ENCODE measurements at regions of chr9 and their contacts with region 1.

Region 1: DNA sequence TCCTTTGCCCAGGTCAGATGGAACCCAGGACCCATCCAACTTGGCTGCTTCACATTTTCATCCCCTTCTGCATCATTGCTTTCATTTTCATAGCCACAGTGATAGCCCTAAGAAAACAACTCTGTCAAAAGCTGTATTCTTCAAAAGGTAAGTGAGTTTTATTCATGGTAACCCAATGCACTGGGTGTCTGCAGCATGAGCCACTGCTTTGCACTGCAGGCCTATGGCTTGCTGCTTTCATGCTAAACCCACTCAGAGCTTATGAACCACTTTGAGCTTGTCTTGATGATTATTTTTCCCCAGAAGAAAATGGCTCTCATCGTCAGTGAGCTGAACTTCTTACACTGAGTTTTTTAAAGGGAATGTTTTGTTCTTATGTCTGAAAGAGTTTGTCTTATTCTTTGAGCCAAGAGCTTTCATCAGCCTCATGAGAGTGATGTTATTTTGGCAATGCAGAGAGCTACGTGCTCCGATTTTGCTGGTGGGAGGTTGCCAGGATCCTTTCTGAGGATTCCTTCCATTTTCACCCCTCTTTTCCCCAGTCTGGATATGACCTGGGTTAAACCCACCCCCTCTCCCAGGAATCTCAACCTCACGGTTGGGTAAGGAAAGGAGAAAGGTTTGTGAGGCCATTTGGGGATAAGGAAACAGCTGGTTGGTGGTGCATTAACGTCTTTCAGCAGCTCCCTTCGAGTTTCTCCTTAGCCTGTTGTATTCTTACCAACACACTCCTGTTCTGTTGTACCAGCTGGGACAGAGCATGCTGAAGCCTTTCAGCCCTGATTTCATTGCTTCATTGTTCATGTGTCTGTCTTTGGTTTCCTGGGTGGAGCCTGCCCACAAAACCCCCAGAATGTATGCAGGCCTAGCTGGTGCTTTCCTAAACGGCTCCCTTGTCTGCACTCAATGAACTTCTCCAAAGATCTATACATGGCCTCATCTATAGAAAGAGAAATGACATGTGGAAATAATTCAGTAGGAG is 47.6 kb downstream of the PDCD1LG2 start:
- DNase-seq: peak; percentile 20 to 73 (median 61)
- ATAC-seq: peak; percentile 97
- H3K4me3 ChIP-seq: peak overlapping the region; percentile 24
- H3K4me3 Mint-ChIP-seq: peak overlapping the region; percentile 58 to 79 (median 68)
- H3K27ac ChIP-seq: peak overlapping the region; percentile 68
- H3K27ac Mint-ChIP-seq: peak overlapping the region; percentile 87 to 98 (median 94)
- H3K4me1 ChIP-seq: peaks cover 24 to 31% of the 10 kb centered on the region in 2 donors
- H3K4me1 Mint-ChIP-seq: peaks cover 32 to 59% (median 53%) of the 10 kb centered on the region in 7 donors
- H3K27me3 ChIP-seq: no peaks in the 10 kb centered on the region
- H3K27me3 Mint-ChIP-seq: no peaks in the 10 kb centered on the region

Region 2: DNA sequence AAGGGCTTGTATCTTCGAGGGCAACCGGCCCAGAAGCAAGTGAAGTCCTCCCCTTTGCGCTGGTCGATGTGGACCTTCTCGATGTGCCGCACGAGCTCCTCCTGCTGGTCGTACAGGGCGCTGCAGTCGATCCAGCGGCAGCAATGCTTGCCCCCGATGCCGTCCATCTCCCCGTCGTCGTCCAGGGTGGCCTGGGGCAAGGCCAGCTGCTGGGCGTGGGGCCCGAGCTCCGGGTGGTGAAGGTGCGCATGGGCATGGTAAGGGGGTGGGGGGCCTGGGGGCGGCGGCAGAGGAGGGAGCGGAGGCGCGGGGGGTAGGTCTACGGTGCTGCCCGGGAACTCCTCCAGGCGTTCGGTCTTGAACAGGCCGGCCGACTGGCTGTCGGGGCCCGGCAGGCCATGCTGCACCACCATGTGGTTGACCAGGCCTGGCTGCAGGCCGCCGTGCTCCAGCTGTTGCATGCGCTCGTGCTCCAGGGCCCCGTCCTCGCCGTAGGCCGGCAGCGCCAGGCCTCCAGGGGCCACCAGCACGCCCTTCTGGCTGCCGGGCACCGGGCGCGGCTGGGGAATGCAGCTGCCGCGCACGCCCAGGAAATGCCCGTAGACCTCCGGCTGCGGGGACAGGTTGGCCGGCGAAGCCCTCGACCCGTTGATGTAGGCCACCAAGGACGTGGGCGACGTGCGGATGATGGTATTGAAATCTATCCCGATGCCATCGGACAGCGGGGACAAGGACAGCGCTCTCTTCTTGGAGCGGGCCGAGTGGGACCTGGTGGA is 1439.9 kb before region 1 on chr9:
- CTCF ChIA-PET with region 1: no interaction called
- POLR2A ChIA-PET with region 1: no interaction called
- intact Hi-C with region 1: no loop called
- DNase-seq: peak in 7 of 9 donors; percentile 5 to 48 (median 13)
- ATAC-seq: no peak
- H3K4me3 ChIP-seq: no peak overlapping the region
- H3K4me3 Mint-ChIP-seq: no peak overlapping the region
- H3K27ac ChIP-seq: no peak overlapping the region
- H3K27ac Mint-ChIP-seq: no peak overlapping the region
- H3K4me1 ChIP-seq: no peaks in the 10 kb centered on the region
- H3K4me1 Mint-ChIP-seq: peaks cover 0 to 2% (median 0%) of the 10 kb centered on the region in 7 donors
- H3K27me3 ChIP-seq: no peaks in the 10 kb centered on the region
- H3K27me3 Mint-ChIP-seq: no peaks in the 10 kb centered on the region

Region 3: GRCh38 chr9:5450359-5451091 is 107.4 kb before region 1 on chr9 and contains the start of gene CD274:
- CTCF ChIA-PET with region 1: interaction called, 3 read pairs
- POLR2A ChIA-PET with region 1: interaction called, 14 read pairs
- intact Hi-C with region 1: loop called (anchors 1 to 2 kb)
- DNase-seq: peak; percentile 61 to 89 (median 80)
- ATAC-seq: peak; percentile 95
- H3K4me3 ChIP-seq: peak within 1 kb of the TSS; percentile 78
- H3K4me3 Mint-ChIP-seq: peak within 1 kb of the TSS; percentile 92 to 98 (median 95)
- H3K27ac ChIP-seq: peak within 1 kb of the TSS; percentile 94
- H3K27ac Mint-ChIP-seq: peak within 1 kb of the TSS; percentile 97 to 99 (median 98)
- H3K4me1 ChIP-seq: peaks cover 0 to 11% of the 10 kb centered on the region in 2 donors
- H3K4me1 Mint-ChIP-seq: peaks cover 33 to 69% (median 62%) of the 10 kb centered on the region in 7 donors
- H3K27me3 ChIP-seq: no peaks in the 10 kb centered on the region
- H3K27me3 Mint-ChIP-seq: no peaks in the 10 kb centered on the region
- total RNA-seq, gene CD274: 2.9 to 38.7 (median 7.8) TPM

Region 4: DNA sequence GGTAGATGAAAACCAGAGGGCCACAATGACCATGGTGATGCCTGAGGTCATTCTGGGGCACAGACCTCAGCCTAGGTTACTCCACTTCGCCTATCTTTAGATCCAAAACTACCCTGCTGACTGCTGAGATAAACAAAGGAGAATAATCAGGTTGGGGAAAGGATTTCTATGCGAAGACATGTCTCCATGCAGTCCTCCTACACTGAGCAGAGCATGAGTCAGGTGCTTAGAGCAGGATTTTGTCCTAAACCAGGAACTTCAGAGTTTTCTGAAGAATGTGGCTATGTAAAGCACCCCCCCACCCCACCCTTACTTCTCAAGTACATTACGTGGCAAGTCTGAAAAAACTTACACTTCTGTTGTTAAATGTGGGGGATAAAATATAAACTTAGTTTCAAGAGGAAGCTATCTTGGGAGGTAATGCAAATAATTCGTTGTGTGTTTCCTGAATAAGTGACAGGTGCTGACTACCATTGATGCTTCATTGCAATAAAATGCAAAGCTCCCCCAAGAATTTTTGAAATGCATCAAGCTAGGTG is 28.1 kb before region 1 on chr9:
- CTCF ChIA-PET with region 1: no interaction called
- POLR2A ChIA-PET with region 1: interaction called, 4 read pairs
- intact Hi-C with region 1: loop called in 1 of 2 experiments (anchors 2 kb)
- DNase-seq: no peak
- ATAC-seq: no peak
- H3K4me3 ChIP-seq: no peak overlapping the region
- H3K4me3 Mint-ChIP-seq: no peak overlapping the region
- H3K27ac ChIP-seq: no peak overlapping the region
- H3K27ac Mint-ChIP-seq: peak overlapping the region in 6 of 9 donors; percentile 5 to 72 (median 28)
- H3K4me1 ChIP-seq: peaks cover 19 to 32% of the 10 kb centered on the region in 2 donors
- H3K4me1 Mint-ChIP-seq: peaks cover 20 to 50% (median 42%) of the 10 kb centered on the region in 7 donors
- H3K27me3 ChIP-seq: no peaks in the 10 kb centered on the region
- H3K27me3 Mint-ChIP-seq: no peaks in the 10 kb centered on the region

Region 5: GRCh38 chr9:5569409-5569808 is 11.5 kb after region 1 on chr9:
- CTCF ChIA-PET with region 1: interaction called, 5 read pairs
- POLR2A ChIA-PET with region 1: interaction called, 23 read pairs
- intact Hi-C with region 1: loop called in 1 of 2 experiments (anchors 1 kb)
- DNase-seq: no peak
- ATAC-seq: peak; percentile 90
- H3K4me3 ChIP-seq: no peak overlapping the region
- H3K4me3 Mint-ChIP-seq: peak overlapping the region in 3 of 10 donors; percentile 3 to 62 (median 60)
- H3K27ac ChIP-seq: no peak overlapping the region
- H3K27ac Mint-ChIP-seq: peak overlapping the region in 5 of 9 donors; percentile 5 to 92 (median 67)
- H3K4me1 ChIP-seq: peaks cover 13 to 14% of the 10 kb centered on the region in 2 donors
- H3K4me1 Mint-ChIP-seq: peaks cover 14 to 24% (median 18%) of the 10 kb centered on the region in 7 donors
- H3K27me3 ChIP-seq: no peaks in the 10 kb centered on the region
- H3K27me3 Mint-ChIP-seq: no peaks in the 10 kb centered on the region

Region 6: DNA sequence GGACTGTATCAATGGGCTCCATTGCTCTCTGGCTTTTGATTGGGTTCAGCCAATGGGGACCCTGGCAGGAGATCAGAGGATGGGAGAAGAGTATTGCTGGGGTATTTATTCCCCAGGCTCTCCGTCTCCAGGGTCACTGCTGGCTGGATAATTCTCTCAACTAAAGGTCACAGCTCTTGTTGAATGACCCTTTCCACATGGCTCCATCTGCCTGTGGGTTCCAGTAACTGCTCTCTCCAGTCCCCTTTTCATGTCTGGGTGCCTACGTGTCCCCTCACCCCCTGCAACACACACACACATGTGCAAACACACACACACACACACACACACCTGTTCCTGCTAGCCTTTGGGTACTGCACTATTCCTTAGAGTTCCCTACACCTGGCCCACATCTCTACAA is 17.1 kb after region 1 on chr9:
- CTCF ChIA-PET with region 1: interaction called, 5 read pairs
- POLR2A ChIA-PET with region 1: interaction called, 23 read pairs
- intact Hi-C with region 1: loop called in 1 of 2 experiments (anchors 2 kb)
- DNase-seq: no peak
- ATAC-seq: no peak
- H3K4me3 ChIP-seq: no peak overlapping the region
- H3K4me3 Mint-ChIP-seq: no peak overlapping the region
- H3K27ac ChIP-seq: no peak overlapping the region
- H3K27ac Mint-ChIP-seq: no peak overlapping the region
- H3K4me1 ChIP-seq: no peaks in the 10 kb centered on the region
- H3K4me1 Mint-ChIP-seq: peaks cover 7 to 27% (median 12%) of the 10 kb centered on the region in 7 donors
- H3K27me3 ChIP-seq: no peaks in the 10 kb centered on the region
- H3K27me3 Mint-ChIP-seq: no peaks in the 10 kb centered on the region